Heart left ventricle (tissue), 16 donors: ENCODE measurements at regions of chr4 and their contacts with region 1.

Region 1: GRCh38 chr4:54322818-54323417 is 93.8 kb downstream of the PDGFRA start:
- DNase-seq: peak in 4 of 5 donors; percentile 51 to 64 (median 60)
- ATAC-seq: peak; percentile 47 to 80 (median 78)
- H3K4me3 ChIP-seq: no peak overlapping the region
- H3K27ac ChIP-seq: no peak overlapping the region
- H3K4me1 ChIP-seq: peaks cover 0 to 3% (median 0%) of the 10 kb centered on the region in 12 donors
- H3K27me3 ChIP-seq: no peaks in the 10 kb centered on the region
- CTCF ChIP-seq: peak; percentile 63 to 83 (median 72)
- POLR2A ChIP-seq: no peak

Region 2: DNA sequence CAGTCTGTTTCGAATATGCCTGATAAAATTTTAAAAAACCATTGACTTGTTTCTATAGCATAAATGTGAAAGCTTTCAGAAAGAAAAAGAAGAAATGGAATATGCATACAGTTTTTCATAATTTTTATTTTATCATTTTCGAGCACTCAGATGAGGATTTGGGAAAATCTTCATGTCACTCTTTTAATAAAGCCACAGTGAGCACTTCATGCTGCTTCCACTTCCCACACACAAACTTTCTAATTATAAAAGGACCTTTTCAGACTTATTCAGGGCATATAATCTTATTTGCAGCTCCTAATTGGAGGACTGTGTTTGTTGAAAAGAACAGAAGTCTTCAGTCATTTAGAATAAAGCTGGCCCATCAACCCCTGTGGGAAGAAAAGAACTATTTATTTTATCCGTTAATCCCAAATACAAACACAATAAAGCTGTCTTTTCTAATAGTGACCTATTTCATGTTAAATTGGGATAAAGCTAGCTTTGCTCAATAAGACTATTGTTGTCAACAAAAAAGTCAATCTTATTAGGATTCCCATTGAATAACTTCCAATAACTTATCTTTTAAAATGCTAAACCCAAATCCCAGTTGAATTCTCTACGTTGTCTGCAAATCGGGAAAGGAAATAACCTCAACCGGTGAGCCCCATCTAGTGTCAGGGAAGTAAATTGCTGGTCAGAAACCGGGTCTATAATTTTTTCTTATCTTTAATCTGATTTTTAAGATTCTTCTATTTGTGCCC is 117.6 kb after region 1 on chr4:
- intact Hi-C with region 1: loop called in 9 of 10 experiments (anchors 1 to 5 kb)
- DNase-seq: no peak
- ATAC-seq: peak in 1 of 4 donors; percentile 57
- H3K4me3 ChIP-seq: peak overlapping the region in 9 of 12 donors; percentile 4 to 48 (median 27)
- H3K27ac ChIP-seq: peak overlapping the region in 9 of 12 donors; percentile 2 to 54 (median 33)
- H3K4me1 ChIP-seq: peaks cover 0 to 7% (median 0%) of the 10 kb centered on the region in 12 donors
- H3K27me3 ChIP-seq: no peaks in the 10 kb centered on the region
- CTCF ChIP-seq: peak; percentile 43 to 75 (median 66)
- POLR2A ChIP-seq: no peak

Region 3: GRCh38 chr4:54675721-54676461 is 353.0 kb after region 1 on chr4:
- intact Hi-C with region 1: loop called in 1 of 10 experiments (anchors 10 kb)
- DNase-seq: no peak
- ATAC-seq: no peak
- H3K4me3 ChIP-seq: no peak overlapping the region
- H3K27ac ChIP-seq: no peak overlapping the region
- H3K4me1 ChIP-seq: no peaks in the 10 kb centered on the region
- H3K27me3 ChIP-seq: no peaks in the 10 kb centered on the region
- CTCF ChIP-seq: no peak
- POLR2A ChIP-seq: no peak

Region 4: GRCh38 chr4:54961357-54961975 is 638.5 kb after region 1 on chr4:
- intact Hi-C with region 1: loop called (anchors 2 to 10 kb)
- DNase-seq: no peak
- ATAC-seq: peak in 2 of 4 donors; percentile 18 to 47
- H3K4me3 ChIP-seq: no peak overlapping the region
- H3K27ac ChIP-seq: no peak overlapping the region
- H3K4me1 ChIP-seq: no peaks in the 10 kb centered on the region
- H3K27me3 ChIP-seq: no peaks in the 10 kb centered on the region
- CTCF ChIP-seq: peak; percentile 46 to 71 (median 62)
- POLR2A ChIP-seq: no peak